ENCODE measurements at regions of chrX and their contacts with region 1.

Region 1: GRCh38 chrX:1391707-1392375 is at the start of gene SLC25A6:
- DNase-seq: peak; percentile 99 to 100 (median 99)
- ATAC-seq: peak; percentile 95 to 96 (median 96)
- H3K4me3 ChIP-seq: peak within 1 kb of the TSS; percentile 78 to 100 (median 95)
- H3K27ac ChIP-seq: peak within 1 kb of the TSS; percentile 97 to 100 (median 99)
- H3K4me1 ChIP-seq: peaks cover 4 to 58% (median 45%) of the 10 kb centered on the region in 12 donors
- H3K27me3 ChIP-seq: no peaks in the 10 kb centered on the region
- CTCF ChIP-seq: peak in 5 of 12 donors; percentile 8 to 46 (median 28)
- POLR2A ChIP-seq: peak; percentile 90 to 96
- total RNA-seq, gene SLC25A6: 109 to 197 (median 129) TPM

Region 2: GRCh38 chrX:1196436-1196835 is 195.4 kb before region 1 on chrX:
- intact Hi-C with region 1: no loop called
- DNase-seq: no peak
- ATAC-seq: no peak
- H3K4me3 ChIP-seq: no peak overlapping the region
- H3K27ac ChIP-seq: no peak overlapping the region
- H3K4me1 ChIP-seq: no peaks in the 10 kb centered on the region
- H3K27me3 ChIP-seq: no peaks in the 10 kb centered on the region
- CTCF ChIP-seq: no peak
- POLR2A ChIP-seq: no peak

Region 3: GRCh38 chrX:1246816-1247215 is 145.0 kb before region 1 on chrX:
- intact Hi-C with region 1: loop called in 2 of 10 experiments (anchors 2 to 10 kb)
- DNase-seq: peak; percentile 52 to 86 (median 65)
- ATAC-seq: peak in 3 of 4 donors; percentile 57 to 66 (median 60)
- H3K4me3 ChIP-seq: no peak overlapping the region
- H3K27ac ChIP-seq: no peak overlapping the region
- H3K4me1 ChIP-seq: peaks cover 0 to 18% (median 12%) of the 10 kb centered on the region in 12 donors
- H3K27me3 ChIP-seq: peaks cover 0 to 12% (median 0%) of the 10 kb centered on the region in 9 donors
- CTCF ChIP-seq: peak; percentile 74 to 92 (median 84)
- POLR2A ChIP-seq: no peak

Region 4: GRCh38 chrX:1323315-1323714 is 68.5 kb before region 1 on chrX:
- intact Hi-C with region 1: loop called in 1 of 10 experiments (anchors 5 kb)
- DNase-seq: peak in 4 of 5 donors; percentile 36 to 64 (median 47)
- ATAC-seq: peak; percentile 32 to 77 (median 64)
- H3K4me3 ChIP-seq: no peak overlapping the region
- H3K27ac ChIP-seq: no peak overlapping the region
- H3K4me1 ChIP-seq: peaks cover 0 to 4% (median 0%) of the 10 kb centered on the region in 12 donors
- H3K27me3 ChIP-seq: peaks cover 0 to 3% (median 0%) of the 10 kb centered on the region in 9 donors
- CTCF ChIP-seq: peak in 11 of 12 donors; percentile 19 to 62 (median 51)
- POLR2A ChIP-seq: no peak

Region 5: DNA sequence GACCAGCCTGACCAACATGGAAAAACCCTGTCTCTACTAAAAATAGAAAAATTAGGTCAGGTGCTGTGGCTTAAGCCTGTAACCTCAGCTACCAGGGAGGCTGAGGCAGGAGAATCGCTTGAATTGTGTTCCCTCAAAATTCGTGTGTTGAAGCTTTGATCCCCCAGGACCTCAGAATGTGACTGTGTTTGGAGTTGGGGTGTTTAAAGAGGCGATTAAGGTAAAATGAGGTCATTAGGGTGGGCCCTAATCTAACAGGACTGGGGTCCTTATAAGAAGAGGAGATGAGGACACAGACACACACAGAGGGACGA is 23.5 kb before region 1 on chrX:
- intact Hi-C with region 1: no loop called
- DNase-seq: no peak
- ATAC-seq: no peak
- H3K4me3 ChIP-seq: no peak overlapping the region
- H3K27ac ChIP-seq: no peak overlapping the region
- H3K4me1 ChIP-seq: no peaks in the 10 kb centered on the region
- H3K27me3 ChIP-seq: no peaks in the 10 kb centered on the region
- CTCF ChIP-seq: no peak
- POLR2A ChIP-seq: no peak

Region 6: GRCh38 chrX:1442016-1442665 is 50.3 kb after region 1 on chrX:
- intact Hi-C with region 1: loop called in 2 of 10 experiments (anchors 10 kb)
- DNase-seq: peak in 4 of 5 donors; percentile 1 to 46 (median 12)
- ATAC-seq: peak in 1 of 4 donors; percentile 16
- H3K4me3 ChIP-seq: no peak overlapping the region
- H3K27ac ChIP-seq: no peak overlapping the region
- H3K4me1 ChIP-seq: no peaks in the 10 kb centered on the region
- H3K27me3 ChIP-seq: no peaks in the 10 kb centered on the region
- CTCF ChIP-seq: no peak
- POLR2A ChIP-seq: no peak

Region 7: GRCh38 chrX:1591102-1591900 is 199.5 kb after region 1 on chrX and contains the start of gene AKAP17A:
- intact Hi-C with region 1: loop called in 2 of 10 experiments (anchors 5 kb)
- DNase-seq: peak; percentile 95 to 98 (median 96)
- ATAC-seq: peak; percentile 89 to 98 (median 96)
- H3K4me3 ChIP-seq: peak within 1 kb of the TSS; percentile 67 to 99 (median 80)
- H3K27ac ChIP-seq: peak within 1 kb of the TSS; percentile 75 to 97 (median 86)
- H3K4me1 ChIP-seq: peaks cover 0 to 30% (median 17%) of the 10 kb centered on the region in 12 donors
- H3K27me3 ChIP-seq: no peaks in the 10 kb centered on the region
- CTCF ChIP-seq: peak in 3 of 12 donors; percentile 15 to 43 (median 35)
- POLR2A ChIP-seq: peak; percentile 41 to 90
- total RNA-seq, gene AKAP17A: 12.5 to 20.4 (median 15.6) TPM